ENCODE measurements at regions of chr1 and their contacts with region 1.

Region 1: GRCh38 chr1:26169669-26170471 is at the start of gene ZNF593:
- DNase-seq: peak; percentile 94
- H3K4me3 Mint-ChIP-seq: peak within 1 kb of the TSS; percentile 83
- H3K27ac Mint-ChIP-seq: peak within 1 kb of the TSS; percentile 72
- H3K4me1 Mint-ChIP-seq: peaks cover 17% of the 10 kb centered on the region
- H3K27me3 Mint-ChIP-seq: no peaks in the 10 kb centered on the region
- total RNA-seq, gene ZNF593: 37.4 to 38.0 TPM

Region 2: DNA sequence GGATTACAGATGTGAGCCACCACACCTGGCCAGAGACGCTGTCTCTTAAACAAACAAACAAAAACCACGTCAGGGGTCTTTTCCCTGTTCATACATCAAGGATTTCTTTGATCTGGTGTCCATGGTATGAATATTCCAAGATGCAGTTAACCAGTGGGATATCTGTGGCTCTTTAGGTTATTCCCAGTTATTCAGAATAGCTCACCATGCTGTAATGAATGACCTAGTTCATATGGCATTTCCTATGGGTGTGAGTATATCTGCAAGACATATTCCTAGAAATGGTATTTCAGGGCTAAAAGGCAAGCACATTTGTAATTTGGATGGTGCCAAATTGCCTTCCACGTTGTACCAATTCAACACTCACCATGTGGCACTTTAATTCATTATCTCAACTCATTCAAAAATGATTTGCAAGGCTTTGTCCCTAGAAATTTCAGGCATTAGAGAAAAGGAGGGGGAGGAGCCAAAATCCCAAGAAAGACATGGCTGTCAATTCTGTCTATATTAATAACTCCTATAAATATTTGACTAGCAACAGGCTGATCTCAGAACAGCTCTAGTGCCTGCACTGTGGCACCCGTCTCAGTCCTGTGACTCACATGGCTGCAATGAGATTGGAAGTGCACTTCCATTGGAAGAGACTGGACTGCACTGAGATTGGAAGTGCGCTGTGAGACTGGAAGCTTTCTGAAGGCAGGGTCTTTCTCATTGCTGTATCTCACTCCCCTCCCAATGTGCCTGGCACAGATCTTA is 257.6 kb before region 1 on chr1:
- CTCF ChIA-PET with region 1: no interaction called
- POLR2A ChIA-PET with region 1: no interaction called
- intact Hi-C with region 1: no loop called
- DNase-seq: no peak
- H3K4me3 Mint-ChIP-seq: no peak overlapping the region
- H3K27ac Mint-ChIP-seq: no peak overlapping the region
- H3K4me1 Mint-ChIP-seq: no peaks in the 10 kb centered on the region
- H3K27me3 Mint-ChIP-seq: no peaks in the 10 kb centered on the region

Region 3: GRCh38 chr1:25958465-25958864 is 211.4 kb before region 1 on chr1:
- CTCF ChIA-PET with region 1: no interaction called
- POLR2A ChIA-PET with region 1: no interaction called
- intact Hi-C with region 1: no loop called
- DNase-seq: no peak
- H3K4me3 Mint-ChIP-seq: no peak overlapping the region
- H3K27ac Mint-ChIP-seq: no peak overlapping the region
- H3K4me1 Mint-ChIP-seq: no peaks in the 10 kb centered on the region
- H3K27me3 Mint-ChIP-seq: no peaks in the 10 kb centered on the region

Region 4: GRCh38 chr1:26102526-26102925 is 67.3 kb before region 1 on chr1:
- CTCF ChIA-PET with region 1: interaction called, 10 read pairs
- POLR2A ChIA-PET with region 1: no interaction called
- intact Hi-C with region 1: no loop called
- DNase-seq: no peak
- H3K4me3 Mint-ChIP-seq: no peak overlapping the region
- H3K27ac Mint-ChIP-seq: no peak overlapping the region
- H3K4me1 Mint-ChIP-seq: peaks cover 7% of the 10 kb centered on the region
- H3K27me3 Mint-ChIP-seq: no peaks in the 10 kb centered on the region

Region 5: GRCh38 chr1:26126321-26127084 is 43.4 kb before region 1 on chr1:
- CTCF ChIA-PET with region 1: interaction called, 8 read pairs
- POLR2A ChIA-PET with region 1: no interaction called
- intact Hi-C with region 1: loop called (anchors 2 kb)
- DNase-seq: peak; percentile 57
- H3K4me3 Mint-ChIP-seq: peak overlapping the region; percentile 58
- H3K27ac Mint-ChIP-seq: peak overlapping the region; percentile 89
- H3K4me1 Mint-ChIP-seq: peaks cover 49% of the 10 kb centered on the region
- H3K27me3 Mint-ChIP-seq: no peaks in the 10 kb centered on the region